ENCODE measurements at regions of chr7 and their contacts with region 1.

Region 1: GRCh38 chr7:131501422-131501821 is 55.0 kb downstream of the PODXL start:
- DNase-seq: no peak
- CTCF ChIP-seq: no peak

Region 2: DNA sequence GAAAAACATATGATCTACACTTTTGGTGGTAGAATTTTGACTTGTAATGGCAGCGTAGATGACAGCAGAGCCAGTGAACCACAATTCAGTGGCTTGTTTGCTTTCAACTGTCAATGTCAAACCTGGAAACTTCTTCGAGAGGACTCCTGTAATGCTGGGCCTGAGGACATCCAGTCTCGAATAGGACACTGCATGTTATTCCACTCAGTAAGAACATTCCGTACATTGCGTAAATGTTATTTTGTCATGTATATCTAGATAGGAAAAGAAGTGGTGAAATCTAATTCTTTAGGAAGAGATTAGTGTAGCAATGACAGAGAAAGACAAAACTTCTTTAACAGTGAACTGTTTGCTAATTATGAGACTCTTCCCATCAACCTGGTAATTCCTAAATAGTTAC is 57.9 kb before region 1 on chr7:
- CTCF ChIA-PET with region 1: no interaction called
- POLR2A ChIA-PET with region 1: no interaction called
- DNase-seq: no peak
- CTCF ChIP-seq: no peak

Region 3: DNA sequence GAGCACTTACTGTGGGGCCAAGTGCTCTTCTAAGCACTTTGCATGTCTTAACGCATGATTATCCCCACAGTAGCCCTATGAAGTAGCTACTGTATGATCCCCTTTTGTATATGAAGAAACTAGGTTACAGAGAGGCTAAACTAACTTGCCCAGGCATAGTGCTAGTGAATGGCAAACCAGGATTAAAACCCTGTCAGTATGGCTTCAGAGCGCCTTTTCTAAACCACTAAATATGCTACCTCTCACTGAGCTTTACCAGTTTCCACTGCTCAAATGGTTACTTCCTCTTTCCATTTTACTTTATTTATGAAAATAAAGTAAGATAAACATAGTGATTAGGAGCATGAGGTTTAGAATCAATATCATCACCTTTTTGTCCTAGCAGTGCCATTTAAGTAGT is 18.6 kb before region 1 on chr7:
- CTCF ChIA-PET with region 1: interaction called, 13 read pairs
- POLR2A ChIA-PET with region 1: no interaction called
- DNase-seq: no peak
- CTCF ChIP-seq: no peak

Region 4: GRCh38 chr7:131488361-131488760 is 13.1 kb before region 1 on chr7:
- CTCF ChIA-PET with region 1: interaction called, 15 read pairs
- POLR2A ChIA-PET with region 1: no interaction called
- DNase-seq: no peak
- CTCF ChIP-seq: no peak

Region 5: DNA sequence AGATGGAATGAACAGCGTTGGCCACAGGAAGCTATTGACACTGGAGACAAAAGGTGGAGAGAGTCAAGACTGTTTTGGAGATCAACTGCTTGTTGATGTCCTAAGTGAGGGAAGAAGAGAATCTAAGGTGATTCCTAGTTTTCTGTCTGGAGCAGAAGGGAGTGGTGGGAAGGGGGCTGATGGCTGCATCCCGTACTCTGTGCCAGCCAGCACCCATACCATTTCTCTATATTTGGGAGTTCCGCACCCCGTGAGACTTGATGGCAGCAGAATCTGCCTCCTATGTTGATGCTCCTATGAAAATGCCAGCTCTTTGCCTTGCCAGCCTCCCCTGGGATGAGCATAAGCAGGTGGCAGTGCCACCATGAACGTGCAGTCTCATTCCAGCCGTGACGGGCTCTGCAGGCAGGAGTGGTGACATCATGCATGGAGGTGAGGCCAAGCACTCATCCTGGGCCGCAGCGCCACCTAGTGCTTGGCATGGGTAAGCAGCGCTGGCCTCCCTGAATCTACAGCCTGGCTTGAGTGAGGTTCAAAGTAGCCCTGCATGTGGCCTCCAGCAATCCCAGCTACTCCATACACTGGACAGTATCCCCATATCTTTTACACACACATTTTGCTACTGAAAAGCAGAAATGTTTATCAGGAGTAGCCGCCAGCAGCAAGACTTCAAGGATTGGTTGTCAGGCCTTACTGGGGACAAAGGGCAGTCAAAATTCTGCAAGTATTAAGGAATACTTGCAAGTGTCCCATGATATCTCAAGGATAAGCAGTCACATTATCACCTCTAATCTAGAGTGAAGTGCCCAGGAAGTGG is 12.0 kb after region 1 on chr7:
- CTCF ChIA-PET with region 1: interaction called, 59 read pairs
- POLR2A ChIA-PET with region 1: no interaction called
- DNase-seq: peak; percentile 85
- CTCF ChIP-seq: peak; percentile 100

Region 6: DNA sequence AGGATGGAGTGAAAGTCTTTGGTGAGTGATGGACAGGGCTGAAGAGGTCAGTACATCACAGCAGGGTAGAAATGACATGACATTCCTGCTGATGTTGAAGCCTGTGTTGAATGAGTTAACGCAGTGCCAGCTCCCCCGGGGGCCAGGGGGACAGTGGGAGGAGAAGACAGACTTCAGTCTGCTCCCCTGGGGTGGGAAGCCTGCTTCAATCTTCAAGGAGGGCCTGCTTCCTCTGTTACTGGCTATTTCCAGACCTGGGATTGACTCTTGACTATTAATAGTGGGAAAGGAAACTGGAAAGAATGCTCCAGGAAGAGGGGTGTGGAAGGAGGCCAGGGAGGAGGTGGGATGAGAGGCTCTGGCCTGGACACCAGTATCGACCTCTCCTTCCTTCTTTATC is 27.8 kb after region 1 on chr7:
- CTCF ChIA-PET with region 1: no interaction called
- POLR2A ChIA-PET with region 1: no interaction called
- DNase-seq: no peak
- CTCF ChIP-seq: no peak

Region 7: DNA sequence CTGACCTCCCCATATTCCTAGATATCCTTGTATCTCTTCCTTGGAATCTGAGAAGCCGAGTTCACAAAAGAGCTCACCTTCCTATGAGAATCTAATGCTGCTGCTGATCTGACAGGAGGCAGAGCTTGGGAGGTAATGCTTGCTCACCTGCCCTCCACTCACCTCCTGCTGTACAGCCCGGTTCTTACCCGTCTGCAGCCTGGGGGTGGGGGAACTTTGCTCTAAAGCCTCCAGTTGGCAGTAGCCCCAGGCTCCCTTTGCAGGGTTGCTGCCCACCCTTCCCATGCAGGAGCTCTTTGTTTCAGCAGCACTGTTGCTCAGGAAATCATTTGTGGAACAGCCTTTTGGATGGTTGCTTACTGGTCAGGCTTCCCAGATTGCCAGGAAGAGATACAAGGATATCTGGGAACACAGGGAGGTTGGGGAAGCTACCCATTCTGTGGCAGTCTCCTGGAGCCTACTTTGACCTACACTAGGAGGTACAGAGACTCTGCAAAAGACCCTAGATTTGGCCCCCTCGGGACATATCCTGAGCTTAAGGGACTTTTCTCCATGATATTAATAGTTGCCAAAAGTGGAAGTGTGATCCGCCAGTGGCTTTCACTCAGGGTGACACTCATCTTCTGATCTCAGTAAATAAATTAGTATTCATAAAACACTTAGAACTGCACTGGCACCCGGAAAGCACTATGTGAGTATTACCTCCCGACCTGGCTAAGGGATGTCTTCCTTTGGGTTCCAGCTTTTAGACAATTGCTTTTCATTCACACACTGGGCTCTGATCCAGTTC is 418.7 kb after region 1 on chr7:
- CTCF ChIA-PET with region 1: no interaction called
- POLR2A ChIA-PET with region 1: no interaction called
- DNase-seq: peak; percentile 25
- CTCF ChIP-seq: no peak